Esophagus muscularis mucosa (tissue), 4 donors: ENCODE measurements at regions of chr13 and their contacts with region 1.

Region 1: DNA sequence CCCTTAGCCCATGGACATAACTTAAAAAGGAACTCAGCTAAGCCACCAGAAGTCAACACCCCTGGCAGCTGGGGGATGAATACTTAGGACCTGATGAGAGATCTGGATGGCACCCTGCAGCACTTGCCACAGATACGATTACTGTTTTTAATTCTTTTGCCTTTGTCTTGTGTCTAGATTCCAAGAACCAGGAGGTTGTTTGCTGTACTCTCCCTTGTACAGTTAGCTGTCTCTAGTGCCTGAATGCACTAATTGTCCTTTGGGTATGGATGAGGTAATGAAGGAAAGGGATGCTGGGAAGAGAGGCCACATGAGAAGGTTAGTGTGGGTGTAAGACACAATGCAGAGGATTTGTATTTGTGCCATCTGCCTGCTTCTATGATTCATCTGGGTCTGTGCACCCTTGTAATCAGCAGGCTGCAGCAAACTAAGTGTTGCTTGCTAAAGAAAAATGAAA is 385.8 kb downstream of the KCNRG start:
- DNase-seq: no peak
- H3K4me3 ChIP-seq: no peak overlapping the region
- H3K27ac ChIP-seq: peak overlapping the region in 2 of 4 donors; percentile 22 to 52
- H3K4me1 ChIP-seq: peaks cover 16 to 37% (median 29%) of the 10 kb centered on the region in 4 donors
- H3K27me3 ChIP-seq: no peaks in the 10 kb centered on the region
- CTCF ChIP-seq: no peak
- EP300 ChIP-seq: no peak
- POLR2A ChIP-seq: no peak

Region 2: DNA sequence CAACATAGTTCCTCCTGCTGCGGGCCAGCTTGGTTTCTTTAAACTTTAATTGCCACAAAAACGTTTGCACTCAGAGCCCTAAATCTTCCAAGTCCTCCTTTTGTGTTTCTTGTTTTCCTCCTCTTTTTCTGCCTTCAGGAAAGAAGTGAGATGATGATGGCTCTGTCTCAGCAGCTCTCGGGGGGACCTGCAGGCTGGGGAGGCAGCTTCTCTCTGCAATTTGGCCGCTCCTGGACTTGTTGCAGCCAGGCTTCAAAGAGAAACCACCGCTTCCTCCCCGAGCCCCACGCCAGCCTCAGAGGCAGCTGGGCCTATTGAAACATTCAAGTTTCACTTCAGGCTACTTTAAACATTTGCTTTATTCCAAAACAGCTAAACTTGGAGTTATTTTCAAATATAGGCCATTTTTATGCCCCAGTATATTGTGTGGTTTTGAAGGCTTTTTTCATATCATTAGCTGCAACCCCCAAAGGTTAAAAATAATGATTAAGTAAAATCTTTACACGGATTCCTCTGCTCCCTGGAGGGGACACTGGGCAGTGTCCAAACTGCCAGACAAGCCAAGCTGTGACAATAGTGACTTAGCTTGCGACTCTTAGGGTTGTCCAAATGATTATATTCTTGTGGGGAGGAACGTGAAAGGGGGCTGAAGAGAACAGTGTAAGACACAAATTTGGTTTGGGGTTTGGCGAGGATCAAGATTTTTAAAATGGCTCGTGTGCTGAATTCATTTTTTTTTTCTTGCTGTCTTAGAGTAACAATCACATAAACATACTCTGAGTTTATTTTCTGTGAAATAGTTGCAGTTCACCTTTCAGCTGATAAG is 111.6 kb after region 1 on chr13:
- intact Hi-C with region 1: loop called (anchors 10 kb)
- DNase-seq: no peak
- H3K4me3 ChIP-seq: peak overlapping the region; percentile 34 to 50 (median 39)
- H3K27ac ChIP-seq: peak overlapping the region; percentile 72 to 75 (median 74)
- H3K4me1 ChIP-seq: peaks cover 22 to 32% (median 28%) of the 10 kb centered on the region in 4 donors
- H3K27me3 ChIP-seq: no peaks in the 10 kb centered on the region
- CTCF ChIP-seq: peak in 2 of 3 experiments; percentile 16 to 18
- EP300 ChIP-seq: no peak
- POLR2A ChIP-seq: no peak